ENCODE measurements at regions of chr1 and their contacts with region 1.

Region 1: DNA sequence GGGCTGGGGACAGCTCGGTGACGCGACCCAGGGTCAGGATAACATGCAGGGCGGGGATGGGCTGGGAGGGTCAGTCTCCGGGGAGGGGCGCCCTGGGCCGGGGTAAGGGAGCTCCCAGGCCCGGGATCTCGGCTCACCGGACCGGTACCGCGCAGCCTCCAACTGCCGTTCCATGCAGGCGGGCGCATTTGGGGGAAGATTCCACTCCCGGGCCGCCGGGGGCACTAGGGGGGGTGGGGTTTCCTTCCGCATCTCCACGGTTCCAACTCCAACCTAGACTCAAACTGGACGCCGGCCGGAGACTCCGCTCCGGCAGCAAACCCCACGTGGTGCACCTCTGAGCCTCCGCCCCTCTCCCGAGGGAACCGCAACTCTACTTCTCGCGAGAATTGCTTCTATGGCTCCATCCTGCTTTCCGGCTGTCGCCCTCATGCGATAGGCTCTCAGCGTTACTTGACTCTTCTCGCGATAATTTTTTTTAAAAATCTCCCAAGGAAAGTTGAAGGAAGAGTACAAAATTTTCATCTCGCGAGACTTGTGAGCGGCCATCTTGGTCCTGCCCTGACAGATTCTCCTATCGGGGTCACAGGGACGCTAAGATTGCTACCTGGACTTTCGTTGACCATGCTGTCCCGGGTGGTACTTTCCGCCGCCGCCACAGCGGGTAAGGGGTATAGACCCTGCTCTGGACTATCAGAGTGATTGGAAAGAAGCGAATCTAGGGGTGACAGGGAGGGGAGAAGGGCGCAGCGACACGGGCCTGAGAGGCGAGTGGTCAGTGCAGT is at the starts of genes ATP5PB and WDR77:
- DNase-seq: peak; percentile 92 to 100
- H3K4me3 ChIP-seq: peak within 1 kb of the TSS; percentile 85
- H3K27ac ChIP-seq: peak within 1 kb of the TSS; percentile 69
- H3K4me1 ChIP-seq: peaks cover 23% of the 10 kb centered on the region
- H3K27me3 ChIP-seq: no peaks in the 10 kb centered on the region
- CTCF ChIP-seq: no peak
- total RNA-seq, gene ATP5PB: 183 and 212 TPM in 2 replicates
- total RNA-seq, gene WDR77: 20.6 and 23.7 TPM in 2 replicates

Region 2: DNA sequence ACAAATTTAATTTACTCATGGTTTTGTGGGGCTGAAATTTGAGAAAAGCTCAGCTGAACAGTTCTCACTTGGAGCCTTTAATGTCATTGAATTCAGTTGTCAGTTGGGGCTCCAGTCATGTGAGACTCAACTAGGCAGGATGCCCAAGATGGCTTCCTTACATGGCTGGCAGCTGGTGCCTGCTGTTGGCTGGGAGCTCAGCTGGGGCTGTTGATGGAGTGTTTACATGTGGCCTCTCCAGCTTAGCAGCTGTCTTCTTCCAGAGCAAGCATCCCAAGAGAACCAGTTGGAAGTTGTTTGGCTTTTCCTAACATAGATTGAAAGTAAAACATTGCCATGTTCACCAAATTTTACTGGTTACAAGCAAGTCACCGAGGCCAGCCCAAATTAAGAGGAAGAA is 692.6 kb before region 1 on chr1:
- CTCF ChIA-PET with region 1: no interaction called
- POLR2A ChIA-PET with region 1: no interaction called
- intact Hi-C with region 1: no loop called
- DNase-seq: no peak
- H3K4me3 ChIP-seq: no peak overlapping the region
- H3K27ac ChIP-seq: no peak overlapping the region
- H3K4me1 ChIP-seq: no peaks in the 10 kb centered on the region
- H3K27me3 ChIP-seq: peaks cover 43% of the 10 kb centered on the region
- CTCF ChIP-seq: no peak

Region 3: GRCh38 chr1:111139956-111140679 is 309.0 kb before region 1 on chr1 and contains the starts of genes CEPT1 and DRAM2:
- CTCF ChIA-PET with region 1: interaction called, 3 read pairs
- POLR2A ChIA-PET with region 1: interaction called, 13 read pairs
- intact Hi-C with region 1: loop called (anchors 10 kb)
- DNase-seq: peak; percentile 92 to 93
- H3K4me3 ChIP-seq: peak within 1 kb of the TSS; percentile 72
- H3K27ac ChIP-seq: peak within 1 kb of the TSS; percentile 70
- H3K4me1 ChIP-seq: peaks cover 28% of the 10 kb centered on the region
- H3K27me3 ChIP-seq: no peaks in the 10 kb centered on the region
- CTCF ChIP-seq: 0 out of 2 replicates have a peak, but pooled peaks have one; percentile 15
- total RNA-seq, gene CEPT1: 29.1 and 33.6 TPM in 2 replicates
- total RNA-seq, gene DRAM2: 34.8 and 37.9 TPM in 2 replicates

Region 4: GRCh38 chr1:111161843-111162487 is 287.1 kb before region 1 on chr1:
- CTCF ChIA-PET with region 1: no interaction called
- POLR2A ChIA-PET with region 1: no interaction called
- intact Hi-C with region 1: no loop called
- DNase-seq: no peak
- H3K4me3 ChIP-seq: no peak overlapping the region
- H3K27ac ChIP-seq: no peak overlapping the region
- H3K4me1 ChIP-seq: no peaks in the 10 kb centered on the region
- H3K27me3 ChIP-seq: no peaks in the 10 kb centered on the region
- CTCF ChIP-seq: no peak

Region 5: DNA sequence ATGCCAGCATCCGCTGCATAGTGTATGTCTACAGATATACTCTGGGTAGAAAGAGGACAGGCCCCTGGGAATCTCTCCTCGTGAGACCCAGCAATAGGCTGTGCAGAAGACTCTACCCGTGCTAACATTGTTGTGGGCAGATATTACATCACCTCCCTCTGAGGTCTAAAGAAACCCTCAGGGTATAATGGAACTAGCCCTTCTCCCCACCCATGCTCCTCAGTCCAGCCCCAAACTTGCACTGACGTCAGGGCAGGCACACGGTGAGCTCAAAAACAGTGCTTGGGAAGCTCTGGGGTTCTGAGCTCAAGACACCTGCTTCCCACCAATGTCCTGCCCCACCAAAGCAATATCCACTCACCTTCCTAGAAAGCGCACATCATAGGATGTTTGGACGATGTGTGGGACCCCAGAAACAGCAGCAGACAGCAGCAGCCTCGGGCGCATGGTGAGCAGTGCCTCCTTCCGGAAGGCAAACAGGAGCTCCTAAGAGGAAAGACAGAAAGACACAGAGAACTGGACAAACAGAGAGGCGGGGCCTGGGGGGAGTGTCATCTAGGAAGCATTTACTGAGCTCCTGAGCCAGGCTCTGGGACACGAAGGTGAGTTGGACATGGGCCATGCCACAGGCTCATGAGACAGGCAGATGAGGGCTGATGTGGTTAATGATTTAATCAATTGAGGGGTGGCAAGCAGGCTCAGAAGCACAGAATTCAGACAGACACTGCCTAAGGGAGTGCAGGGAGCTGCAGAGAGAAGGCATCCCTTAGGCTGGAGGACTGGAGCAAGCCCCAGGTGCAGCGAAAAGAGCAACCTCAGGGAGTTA is 26.3 kb before region 1 on chr1:
- CTCF ChIA-PET with region 1: interaction called, 3 read pairs
- POLR2A ChIA-PET with region 1: interaction called, 15 read pairs
- intact Hi-C with region 1: no loop called
- DNase-seq: peak; percentile 69 to 93
- H3K4me3 ChIP-seq: peak overlapping the region; percentile 47
- H3K27ac ChIP-seq: peak overlapping the region; percentile 58
- H3K4me1 ChIP-seq: peaks cover 50% of the 10 kb centered on the region
- H3K27me3 ChIP-seq: no peaks in the 10 kb centered on the region
- CTCF ChIP-seq: peak; percentile 48; the same call in 1 of the 2 replicates

Region 6: DNA sequence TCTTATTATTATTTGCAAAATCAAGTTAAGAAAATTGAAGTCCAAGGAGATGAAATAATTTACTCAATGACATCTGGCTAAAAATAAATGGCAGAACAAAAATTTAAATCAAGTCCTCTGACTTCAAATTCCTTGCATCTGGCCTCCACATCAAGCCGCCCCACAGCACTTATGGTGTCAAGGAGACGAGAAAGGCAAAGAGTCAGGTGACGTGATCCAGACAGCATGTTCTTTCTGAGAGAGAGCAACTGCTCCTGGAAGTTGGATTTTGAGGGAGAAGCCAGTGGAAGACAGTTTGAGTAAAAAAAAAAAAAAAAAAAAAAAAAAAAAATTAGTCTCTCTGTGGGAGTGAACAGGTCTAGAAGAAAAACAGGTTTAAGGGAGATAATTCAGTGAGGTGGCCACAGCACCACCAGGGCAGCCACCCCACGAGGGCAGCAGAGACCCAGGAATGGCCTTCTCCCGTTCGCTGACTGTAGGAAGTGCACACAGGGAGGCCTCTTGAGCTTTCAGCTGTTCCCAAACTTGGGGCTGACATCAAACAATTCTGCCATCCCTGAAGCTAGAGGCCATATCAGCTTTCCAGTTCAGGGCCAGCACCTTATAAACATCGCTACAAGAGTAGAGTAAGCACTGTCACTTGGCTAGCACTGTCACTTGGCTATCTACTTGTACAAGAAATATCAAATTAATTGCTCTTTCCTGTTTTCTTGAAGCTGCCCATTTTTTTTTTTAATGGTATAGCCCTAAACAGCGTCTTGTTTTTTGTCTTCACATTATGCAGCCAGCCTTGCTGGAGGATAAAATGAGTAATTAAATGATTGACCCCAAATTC is 32.5 kb after region 1 on chr1:
- CTCF ChIA-PET with region 1: no interaction called
- POLR2A ChIA-PET with region 1: no interaction called
- intact Hi-C with region 1: no loop called
- DNase-seq: peak; percentile 80 to 81
- H3K4me3 ChIP-seq: no peak overlapping the region
- H3K27ac ChIP-seq: no peak overlapping the region
- H3K4me1 ChIP-seq: peaks cover 7% of the 10 kb centered on the region; the same call in 1 of the 2 replicates
- H3K27me3 ChIP-seq: no peaks in the 10 kb centered on the region
- CTCF ChIP-seq: peak; percentile 86

Region 7: DNA sequence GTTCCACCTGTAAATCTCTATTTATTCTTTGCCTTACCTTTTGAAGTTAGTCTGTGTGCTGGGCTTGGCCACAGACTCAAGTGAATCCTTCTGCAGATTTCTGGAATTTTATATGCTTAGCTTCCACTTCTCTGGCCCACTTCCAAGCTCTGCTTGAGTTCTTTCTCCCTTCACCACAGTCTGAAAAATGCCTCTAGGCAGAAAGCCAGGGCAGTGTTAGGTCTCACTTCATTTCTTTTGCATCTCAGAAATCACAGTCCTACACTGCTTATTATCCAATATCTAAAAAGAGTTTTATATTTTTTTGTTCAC is 241.2 kb after region 1 on chr1:
- CTCF ChIA-PET with region 1: no interaction called
- POLR2A ChIA-PET with region 1: interaction called, 10 read pairs
- intact Hi-C with region 1: no loop called
- DNase-seq: peak in 1 of 2 experiments; percentile 24
- H3K4me3 ChIP-seq: no peak overlapping the region
- H3K27ac ChIP-seq: 0 out of 2 replicates have a peak overlapping the region, but pooled peaks have one; percentile 1
- H3K4me1 ChIP-seq: no peaks in the 10 kb centered on the region
- H3K27me3 ChIP-seq: no peaks in the 10 kb centered on the region
- CTCF ChIP-seq: no peak

Measured in PC-9 (cell line).